GM10248 (cell line): ENCODE measurements at regions of chr4 and their contacts with region 1.

Region 1: DNA sequence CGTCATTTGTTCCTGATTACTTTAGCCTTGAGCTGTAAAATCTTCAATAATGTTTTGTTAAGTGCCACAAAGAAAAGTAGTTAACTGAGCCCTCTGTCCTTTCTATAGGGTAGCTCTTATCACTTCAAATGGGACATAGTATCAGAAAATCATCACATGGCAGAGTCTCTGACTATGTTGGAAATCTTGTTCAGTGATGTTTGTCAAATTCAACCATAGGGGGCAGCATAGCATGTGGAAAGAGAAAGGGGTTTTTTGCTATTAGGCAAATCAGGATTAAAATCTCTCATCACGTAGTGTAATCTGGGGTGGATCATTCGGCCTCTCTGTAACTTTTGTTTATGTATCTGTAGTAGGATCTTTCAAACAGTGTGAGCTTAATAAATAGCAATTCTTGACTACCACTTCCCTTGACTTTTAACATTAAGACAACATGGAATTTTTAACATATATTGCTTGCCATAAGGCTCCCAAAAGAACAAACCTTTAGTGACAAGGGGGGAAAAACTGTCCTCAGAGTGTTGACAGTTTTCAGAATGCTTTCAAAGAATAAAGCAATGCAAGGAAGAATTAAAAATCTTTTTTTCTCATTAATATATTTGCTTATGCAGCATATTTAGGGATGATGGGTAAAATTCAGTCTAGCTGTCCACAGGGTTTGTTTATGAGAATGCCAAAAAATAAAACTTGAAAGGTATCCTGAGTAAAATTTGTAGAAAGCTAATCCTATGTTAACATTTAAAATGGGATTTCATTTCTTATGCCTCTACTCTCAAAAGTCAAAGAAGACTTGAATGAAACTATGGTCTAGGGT is 127.2 kb downstream of the FBXW7 start:
- DNase-seq: peak; percentile 23
- CTCF ChIP-seq: peak; percentile 33

Region 2: GRCh38 chr4:152392079-152392478 is 16.6 kb before region 1 on chr4:
- CTCF ChIA-PET with region 1: interaction called, 16 read pairs
- POLR2A ChIA-PET with region 1: no interaction called
- DNase-seq: no peak
- CTCF ChIP-seq: no peak

Region 3: GRCh38 chr4:152424977-152425376 is 16.3 kb after region 1 on chr4:
- CTCF ChIA-PET with region 1: interaction called, 57 read pairs
- POLR2A ChIA-PET with region 1: no interaction called
- DNase-seq: no peak
- CTCF ChIP-seq: no peak

Region 4: DNA sequence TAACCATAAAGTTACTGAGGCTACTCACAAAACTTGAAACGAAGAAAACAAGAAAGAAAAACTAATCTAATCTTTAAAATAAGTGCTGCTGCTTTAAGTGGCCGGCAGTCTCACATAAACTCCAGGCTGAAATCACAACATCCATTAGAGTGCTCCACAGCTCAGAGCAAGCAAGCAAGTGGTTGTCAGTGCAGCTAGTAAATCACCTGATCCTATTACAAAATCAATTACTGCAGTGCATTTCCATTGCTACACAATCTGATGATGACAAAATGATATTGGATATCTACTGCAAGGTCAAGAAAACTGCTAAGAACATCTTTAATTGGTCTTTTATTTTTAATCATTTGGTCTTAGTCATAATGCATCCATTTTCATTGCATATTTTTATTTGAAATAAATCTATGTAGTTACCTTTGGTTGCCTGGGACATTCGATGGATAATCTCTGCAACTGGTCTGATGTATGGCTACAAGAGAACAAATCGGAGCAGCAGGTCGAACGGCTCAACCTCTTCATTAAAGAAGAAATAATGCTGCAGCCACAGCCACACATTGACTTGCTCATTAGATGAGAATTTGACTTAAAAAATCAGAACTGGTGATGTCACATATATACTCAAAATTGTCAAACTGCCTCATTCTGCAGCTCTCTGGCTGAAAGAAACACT is 39.5 kb after region 1 on chr4:
- CTCF ChIA-PET with region 1: interaction called, 13 read pairs
- POLR2A ChIA-PET with region 1: no interaction called
- DNase-seq: no peak
- CTCF ChIP-seq: no peak